Left lung (tissue), 14 donors: ENCODE measurements at regions of chr10 and their contacts with region 1.

Region 1: DNA sequence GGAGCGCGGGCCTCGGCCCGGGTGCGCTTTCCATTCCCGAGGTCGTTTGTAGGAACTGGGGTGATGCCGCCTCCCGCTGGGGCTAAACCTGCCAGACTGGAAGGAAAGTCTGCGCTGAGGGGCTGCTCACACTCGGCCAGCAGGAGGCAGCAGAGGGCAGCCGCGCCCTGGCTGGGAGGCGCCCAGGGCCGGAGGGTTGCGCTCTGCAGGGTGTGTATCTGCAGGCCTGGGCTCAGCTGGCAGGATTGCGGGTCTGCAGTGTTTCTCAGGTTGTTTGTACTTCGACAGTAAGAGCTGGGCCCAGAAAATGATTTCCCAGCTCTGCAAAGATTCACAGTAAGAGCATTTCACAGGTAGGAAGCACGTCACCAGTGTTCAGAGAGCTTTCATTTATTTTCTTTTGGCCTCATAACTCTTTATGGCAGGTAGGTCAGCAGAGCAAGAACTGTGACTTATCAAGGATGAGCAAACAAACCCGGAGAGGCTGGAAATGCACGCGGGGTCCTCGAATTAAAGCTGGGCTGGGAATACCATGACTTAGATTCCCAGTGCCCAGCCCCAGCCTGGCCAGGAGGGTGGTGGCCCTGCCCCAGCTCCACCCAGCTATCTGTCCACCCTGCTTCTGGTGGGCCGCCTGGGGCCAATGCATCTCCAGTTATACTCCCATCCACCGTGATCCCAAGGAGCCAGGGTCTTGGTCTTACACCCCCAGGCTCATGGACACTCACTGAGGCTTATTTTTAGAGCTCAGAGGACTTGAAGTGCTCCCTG is 15.2 kb upstream of the PPP2R2D start:
- DNase-seq: peak; percentile 33 to 95 (median 72)
- ATAC-seq: peak; percentile 100
- H3K4me3 ChIP-seq: no peak overlapping the region
- H3K27ac ChIP-seq: no peak overlapping the region
- H3K4me1 ChIP-seq: peaks cover 0 to 6% of the 10 kb centered on the region in 2 donors
- H3K27me3 ChIP-seq: peaks cover 0 to 18% of the 10 kb centered on the region in 2 donors
- CTCF ChIP-seq: peak; percentile 93 to 94

Region 2: DNA sequence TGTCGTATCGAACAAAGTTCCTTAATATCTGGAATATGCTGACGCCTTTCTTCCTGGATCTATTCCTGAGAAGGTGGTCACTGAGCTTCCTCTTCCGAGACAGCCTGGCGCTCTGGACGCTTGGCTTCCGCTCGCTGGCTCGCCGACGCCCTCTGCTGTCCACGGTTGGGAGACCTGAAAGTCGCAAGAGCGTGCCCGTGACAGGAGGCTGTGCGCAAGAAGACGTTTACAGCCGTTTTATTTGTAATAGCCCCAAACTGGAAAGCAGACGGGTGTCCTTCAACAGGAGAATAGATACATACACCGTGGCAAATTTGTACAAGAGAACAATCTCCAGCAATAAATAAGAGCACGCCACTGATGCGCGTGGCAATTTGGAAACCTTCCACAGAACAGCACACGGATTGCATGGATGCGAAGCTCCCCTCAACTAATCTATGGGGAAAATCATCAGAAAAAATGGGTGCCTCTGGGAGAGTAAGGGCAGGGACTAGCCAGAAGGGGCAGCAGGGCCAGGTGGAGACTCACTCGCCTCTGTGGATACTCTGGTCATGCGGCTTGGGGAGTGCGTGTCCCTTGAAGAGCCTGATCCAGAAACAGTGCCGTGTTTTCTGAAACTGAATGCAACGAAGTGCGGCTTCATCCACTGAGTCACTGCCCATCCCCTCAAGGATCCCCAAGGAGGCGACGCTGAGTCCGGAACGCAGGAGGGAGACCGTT is 137.7 kb after region 1 on chr10:
- intact Hi-C with region 1: loop called (anchors 5 to 10 kb)
- DNase-seq: peak; percentile 53 to 96 (median 82)
- ATAC-seq: peak; percentile 99
- H3K4me3 ChIP-seq: peak overlapping the region; percentile 1
- H3K27ac ChIP-seq: no peak overlapping the region
- H3K4me1 ChIP-seq: peaks cover 0 to 10% of the 10 kb centered on the region in 2 donors
- H3K27me3 ChIP-seq: peaks cover 4 to 51% of the 10 kb centered on the region in 2 donors
- CTCF ChIP-seq: peak; percentile 83 to 88

Region 3: DNA sequence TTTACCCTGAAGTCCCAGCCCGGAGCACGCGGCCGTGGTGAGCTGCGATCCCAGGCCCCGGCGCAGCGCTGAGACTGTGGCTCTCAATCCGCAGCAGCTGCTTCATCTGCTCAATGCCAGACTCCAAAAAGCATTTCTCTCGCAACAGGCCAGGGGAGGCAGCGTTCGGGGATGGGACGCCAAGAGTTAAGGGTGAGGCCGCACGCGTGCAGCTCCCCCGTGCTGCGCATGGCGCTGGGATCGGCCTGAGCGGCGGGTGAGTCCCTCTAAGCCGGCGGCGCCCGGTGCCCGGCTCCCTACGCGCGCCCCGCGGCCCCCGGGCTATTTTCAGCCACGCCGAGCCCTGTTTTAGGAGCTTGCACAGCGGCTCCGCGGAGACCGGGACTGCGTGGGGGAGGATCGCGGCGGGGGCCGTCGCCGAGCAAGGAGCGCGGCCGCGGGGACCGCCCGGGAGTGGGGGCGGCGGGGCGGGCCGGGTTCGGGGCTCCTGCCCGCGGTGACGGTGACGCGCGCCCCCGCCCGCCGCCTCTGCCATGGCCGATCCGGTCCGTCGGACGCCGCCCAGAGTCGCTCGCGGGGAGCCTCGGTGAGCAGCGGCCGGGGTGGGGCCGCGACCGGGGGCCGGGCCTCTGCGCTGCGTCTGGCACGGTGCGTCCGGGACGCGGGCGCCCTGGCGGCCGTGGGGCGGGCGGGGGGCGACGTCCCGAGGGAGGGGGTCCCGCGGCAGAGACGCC is 150.7 kb after region 1 on chr10:
- intact Hi-C with region 1: no loop called
- DNase-seq: peak in 1 of 4 donors; percentile 54
- ATAC-seq: peak; percentile 30
- H3K4me3 ChIP-seq: peak overlapping the region in 1 of 2 donors; percentile 13
- H3K27ac ChIP-seq: no peak overlapping the region
- H3K4me1 ChIP-seq: peaks cover 3 to 12% of the 10 kb centered on the region in 2 donors
- H3K27me3 ChIP-seq: peaks cover 51 to 94% of the 10 kb centered on the region in 2 donors
- CTCF ChIP-seq: no peak

Region 4: GRCh38 chr10:132142411-132143161 is 257.0 kb after region 1 on chr10:
- intact Hi-C with region 1: loop called in 1 of 2 experiments (anchors 10 kb)
- DNase-seq: peak in 2 of 4 donors; percentile 30 to 85
- ATAC-seq: peak; percentile 92
- H3K4me3 ChIP-seq: no peak overlapping the region
- H3K27ac ChIP-seq: no peak overlapping the region
- H3K4me1 ChIP-seq: no peaks in the 10 kb centered on the region
- H3K27me3 ChIP-seq: peaks cover 0 to 38% of the 10 kb centered on the region in 2 donors
- CTCF ChIP-seq: peak; percentile 58 to 88